Astrocyte of the cerebellum (primary cell): ENCODE measurements at regions of chr12 and their contacts with region 1.

Region 1: GRCh38 chr12:124493809-124494750 is 73.3 kb downstream of the NCOR2 start:
- DNase-seq: no peak
- H3K4me3 ChIP-seq: no peak overlapping the region
- CTCF ChIP-seq: no peak

Region 2: GRCh38 chr12:124411281-124411878 is 82.7 kb before region 1 on chr12:
- in situ Hi-C with region 1: loop called (anchors 5 kb)
- DNase-seq: peak; percentile 72
- H3K4me3 ChIP-seq: no peak overlapping the region
- CTCF ChIP-seq: no peak

Region 3: DNA sequence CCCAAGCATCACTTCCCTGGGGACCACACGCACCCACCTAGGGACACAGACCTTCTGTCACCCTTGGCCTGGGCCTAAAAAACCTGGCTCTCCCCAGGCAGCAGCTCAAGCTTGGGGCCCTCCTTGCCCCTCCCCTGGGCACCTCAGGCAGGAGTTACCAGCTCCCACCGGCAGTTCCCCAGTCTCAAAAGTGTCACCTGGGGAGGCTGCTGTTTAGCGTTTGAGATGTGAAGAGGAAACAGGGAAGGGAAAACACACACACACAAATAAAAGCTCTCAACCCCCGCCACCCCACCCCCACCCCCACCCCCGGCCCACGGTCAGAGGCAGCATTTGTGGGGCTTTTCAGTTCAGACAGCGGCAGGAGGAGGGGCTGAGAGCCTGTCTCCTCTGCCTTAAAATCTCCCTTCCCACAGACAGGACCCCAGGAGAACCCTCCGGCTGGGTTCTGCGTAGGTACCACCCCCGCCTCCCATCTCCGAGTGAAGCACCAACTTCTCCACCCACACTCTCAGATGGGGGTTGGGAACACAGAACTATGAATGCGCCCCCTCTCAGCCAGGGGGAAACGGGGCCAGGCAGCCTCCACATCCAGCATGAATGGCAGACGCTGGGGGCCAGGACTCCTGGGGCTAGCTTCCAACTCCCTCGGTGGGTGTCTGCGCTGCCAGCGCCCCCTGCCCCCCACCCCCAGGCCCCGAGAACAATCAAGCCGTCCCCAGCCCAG is 70.3 kb after region 1 on chr12:
- in situ Hi-C with region 1: loop called (anchors 5 kb)
- DNase-seq: no peak
- H3K4me3 ChIP-seq: peak overlapping the region; percentile 90
- CTCF ChIP-seq: no peak

Region 4: DNA sequence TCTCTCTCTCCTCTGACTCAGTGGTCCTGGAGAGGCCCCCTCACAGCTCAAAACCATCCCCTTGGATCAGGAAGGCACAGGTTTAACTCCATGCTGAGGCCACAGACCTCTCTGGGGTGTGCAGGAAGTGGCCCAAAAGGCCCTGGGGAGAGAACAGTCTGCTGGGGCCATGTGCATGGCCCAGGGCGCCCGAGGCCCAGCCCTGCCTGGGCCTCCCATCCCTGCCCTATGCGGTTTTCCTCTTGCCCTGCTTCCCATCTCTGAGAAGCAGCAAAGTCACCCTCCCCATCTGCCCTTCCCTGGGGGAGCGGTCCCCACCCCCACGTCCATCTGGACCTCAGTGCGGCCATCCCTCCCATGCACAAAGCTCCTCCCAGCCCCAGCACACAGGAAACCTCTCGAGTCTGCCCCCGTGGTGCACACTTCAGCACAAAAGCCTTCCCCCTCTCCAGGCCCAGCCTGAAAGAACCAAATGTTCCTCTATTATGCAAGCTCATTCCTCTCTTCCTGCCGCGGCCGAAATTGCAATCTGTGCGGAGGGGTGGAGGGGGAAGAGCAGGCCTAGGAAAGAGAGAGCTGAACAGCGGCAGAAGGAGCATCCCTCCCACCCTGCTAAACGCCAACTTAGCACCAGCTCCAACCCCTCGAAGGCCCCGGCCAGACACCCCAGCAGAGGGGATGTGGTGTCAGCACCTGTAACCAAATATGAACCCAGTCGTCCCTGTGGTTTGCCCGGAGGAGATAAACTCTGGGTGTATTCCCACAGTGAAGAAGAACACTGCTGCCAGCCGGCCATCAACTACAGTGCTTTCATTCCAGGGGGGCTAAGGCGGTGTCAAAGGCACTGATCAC is 261.1 kb after region 1 on chr12:
- in situ Hi-C with region 1: loop called (anchors 10 kb)
- DNase-seq: no peak
- H3K4me3 ChIP-seq: no peak overlapping the region
- CTCF ChIP-seq: no peak